A673 (cell line): ENCODE measurements at regions of chr6 and their contacts with region 1.

Region 1: DNA sequence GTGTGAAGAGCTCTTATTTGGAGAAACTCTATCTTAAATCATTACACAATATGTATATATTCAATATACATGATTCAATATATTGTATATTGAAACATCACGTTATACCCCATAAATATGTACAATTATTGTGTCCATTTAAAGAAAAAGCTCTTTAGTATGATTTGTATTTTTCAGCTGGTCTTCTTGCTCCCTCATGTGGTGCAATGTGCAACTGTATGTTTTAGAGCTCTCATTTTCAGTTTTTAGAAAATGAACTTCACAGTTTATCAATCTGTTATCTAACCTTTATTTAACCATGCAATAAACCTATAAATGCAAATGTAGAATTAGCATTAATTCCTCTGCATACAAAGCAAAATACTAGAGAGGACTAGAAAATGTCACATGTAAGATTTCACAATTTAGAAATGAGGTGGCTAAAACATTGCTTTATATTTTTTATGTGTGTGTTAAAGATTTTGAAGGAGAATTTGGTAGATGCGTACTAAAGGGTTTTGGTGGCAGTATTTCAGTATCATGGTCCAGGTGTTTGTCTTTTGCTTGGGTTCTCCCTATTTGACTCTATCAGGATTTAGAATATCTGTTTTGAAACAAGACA is 167.1 kb downstream of the PHF3 start:
- DNase-seq: peak; percentile 49
- H3K4me3 ChIP-seq: no peak overlapping the region
- H3K27ac ChIP-seq: no peak overlapping the region
- H3K4me1 ChIP-seq: peaks cover 37% of the 10 kb centered on the region
- H3K27me3 ChIP-seq: no peaks in the 10 kb centered on the region
- CTCF ChIP-seq: peak; percentile 80

Region 2: GRCh38 chr6:63307581-63308246 is 495.0 kb before region 1 on chr6:
- CTCF ChIA-PET with region 1: interaction called, 5 read pairs
- POLR2A ChIA-PET with region 1: no interaction called
- intact Hi-C with region 1: loop called (anchors 5 kb)
- DNase-seq: peak; percentile 59
- H3K4me3 ChIP-seq: no peak overlapping the region
- H3K27ac ChIP-seq: no peak overlapping the region
- H3K4me1 ChIP-seq: no peaks in the 10 kb centered on the region
- H3K27me3 ChIP-seq: no peaks in the 10 kb centered on the region
- CTCF ChIP-seq: peak; percentile 68

Region 3: DNA sequence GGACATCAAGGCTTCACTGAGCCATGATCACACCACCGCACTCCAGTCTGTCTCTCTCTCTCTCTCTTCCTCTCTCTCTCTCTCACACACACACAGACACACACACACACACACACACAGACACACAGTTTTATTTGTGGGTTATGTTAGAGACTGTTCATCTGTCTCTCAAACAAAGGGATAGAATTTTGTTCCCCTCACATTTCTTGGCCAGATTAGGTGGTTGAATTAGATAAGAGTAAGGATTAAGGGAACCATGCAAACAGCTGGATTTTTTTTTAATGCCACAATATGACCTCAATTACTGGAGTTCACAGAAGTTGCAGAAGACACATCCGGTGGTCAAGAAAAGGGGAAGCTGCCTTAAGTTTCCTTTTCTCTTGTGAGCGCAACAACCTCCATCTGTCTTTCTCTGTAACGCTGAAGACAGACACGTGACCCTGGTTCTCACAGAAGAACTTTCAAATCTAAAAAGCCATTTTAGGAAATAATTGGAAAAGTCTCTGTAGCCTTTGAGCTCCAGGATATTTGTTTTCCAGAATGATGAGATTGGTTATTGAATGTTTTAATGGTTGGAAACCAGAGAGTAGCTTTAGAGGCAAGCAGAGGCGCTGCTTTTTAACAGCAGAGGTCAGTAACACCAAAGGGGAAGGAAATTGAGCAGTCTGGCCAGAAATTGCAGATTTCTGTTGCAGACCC is 450.0 kb before region 1 on chr6:
- CTCF ChIA-PET with region 1: interaction called, 8 read pairs
- POLR2A ChIA-PET with region 1: no interaction called
- intact Hi-C with region 1: loop called (anchors 2 kb)
- DNase-seq: peak; percentile 11
- H3K4me3 ChIP-seq: no peak overlapping the region
- H3K27ac ChIP-seq: no peak overlapping the region
- H3K4me1 ChIP-seq: no peaks in the 10 kb centered on the region
- H3K27me3 ChIP-seq: no peaks in the 10 kb centered on the region
- CTCF ChIP-seq: peak; percentile 50

Region 4: GRCh38 chr6:63571881-63572732 is 230.6 kb before region 1 on chr6 and contains the starts of genes LOC128125822 and PTP4A1:
- CTCF ChIA-PET with region 1: no interaction called
- POLR2A ChIA-PET with region 1: no interaction called
- intact Hi-C with region 1: loop called (anchors 5 kb)
- DNase-seq: peak; percentile 98
- H3K4me3 ChIP-seq: peak within 1 kb of the TSS; percentile 94
- H3K27ac ChIP-seq: peak within 1 kb of the TSS; percentile 98
- H3K4me1 ChIP-seq: peaks cover 11% of the 10 kb centered on the region
- H3K27me3 ChIP-seq: no peaks in the 10 kb centered on the region
- CTCF ChIP-seq: no peak
- total RNA-seq, gene PTP4A1: 64.7 and 80.1 TPM in 2 replicates

Region 5: DNA sequence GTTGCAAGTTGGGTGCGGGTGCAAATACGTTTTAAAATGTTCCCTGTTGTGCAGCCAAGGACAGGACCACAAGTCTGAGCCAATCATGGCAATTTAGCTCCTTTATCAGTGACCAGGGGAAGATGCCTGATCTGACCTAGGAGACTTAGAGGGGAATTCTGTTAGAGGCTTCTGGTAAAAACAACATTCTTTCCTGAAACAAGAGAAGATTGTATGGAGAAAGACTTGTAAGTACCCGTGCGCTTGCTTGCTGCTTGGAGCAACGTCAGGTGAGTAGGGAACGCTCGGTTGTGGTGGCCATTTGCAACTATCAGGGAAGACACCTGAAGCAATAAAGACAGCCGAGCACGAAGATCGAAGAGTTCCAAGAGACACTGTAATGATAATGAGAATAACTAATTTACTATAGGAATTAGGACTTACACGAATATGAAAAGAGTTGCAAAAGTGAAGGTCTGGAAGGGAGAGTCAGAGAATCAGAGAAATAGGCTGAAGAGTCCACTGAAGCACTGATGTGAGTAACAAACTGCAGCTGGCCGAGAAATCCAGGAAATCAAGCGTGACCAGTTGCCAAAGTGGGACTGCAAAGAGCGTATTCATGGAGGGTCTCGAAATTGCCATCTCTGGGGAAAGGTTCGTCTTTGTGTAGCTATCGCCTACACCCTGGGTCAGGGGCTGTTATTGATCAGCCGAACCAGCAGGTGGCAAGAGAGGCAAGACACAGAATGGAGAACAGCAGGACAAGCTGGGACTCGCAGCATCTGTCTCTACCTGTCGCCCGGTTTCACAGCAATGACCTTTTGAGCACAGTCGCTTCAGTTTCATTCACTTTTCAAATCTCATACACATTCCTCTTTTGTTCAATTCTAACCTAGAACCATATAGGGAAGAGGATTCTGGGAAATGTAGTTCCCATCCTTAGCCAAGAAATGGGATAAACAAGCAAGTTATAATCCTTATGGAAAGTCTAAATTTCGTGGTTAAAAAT is 204.4 kb before region 1 on chr6:
- CTCF ChIA-PET with region 1: interaction called, 8 read pairs
- POLR2A ChIA-PET with region 1: no interaction called
- intact Hi-C with region 1: loop called (anchors 5 kb)
- DNase-seq: peak; percentile 80
- H3K4me3 ChIP-seq: peak overlapping the region; percentile 54
- H3K27ac ChIP-seq: no peak overlapping the region
- H3K4me1 ChIP-seq: no peaks in the 10 kb centered on the region
- H3K27me3 ChIP-seq: no peaks in the 10 kb centered on the region
- CTCF ChIP-seq: peak; percentile 92